ENCODE measurements at regions of chr4 and their contacts with region 1.

Region 1: DNA sequence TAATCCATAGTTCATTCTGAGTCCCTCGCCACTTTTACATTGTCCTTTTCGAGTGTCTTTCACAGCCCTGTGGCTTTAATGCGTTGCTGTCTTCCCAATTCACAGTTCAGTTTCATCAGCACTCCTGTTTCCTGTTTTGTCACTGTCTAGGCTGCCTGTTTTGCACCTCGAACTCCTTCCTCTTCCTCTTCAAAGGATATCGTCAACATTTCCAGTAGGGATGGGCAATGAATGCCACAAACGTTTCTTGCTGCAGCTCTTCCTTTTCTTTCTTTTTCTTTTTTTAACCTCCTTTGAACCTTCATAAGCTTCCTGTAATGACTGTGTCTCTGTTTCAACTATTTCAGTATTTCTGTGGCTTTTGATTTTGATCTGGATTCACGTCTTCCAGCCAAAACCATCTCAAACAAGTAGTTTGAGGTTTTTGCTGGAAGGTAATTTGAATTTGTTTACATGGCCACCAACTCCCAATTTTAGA is 105.4 kb downstream of the ANXA3 start:
- DNase-seq: peak; percentile 45
- H3K4me3 Mint-ChIP-seq: peak overlapping the region; percentile 32
- H3K27ac Mint-ChIP-seq: peak overlapping the region; percentile 84
- H3K4me1 Mint-ChIP-seq: peaks cover 45% of the 10 kb centered on the region
- H3K27me3 Mint-ChIP-seq: no peaks in the 10 kb centered on the region

Region 2: GRCh38 chr4:77629885-77630284 is 1027.1 kb before region 1 on chr4:
- CTCF ChIA-PET with region 1: no interaction called
- intact Hi-C with region 1: loop called (anchors 2 kb)
- DNase-seq: peak; percentile 37
- H3K4me3 Mint-ChIP-seq: no peak overlapping the region
- H3K27ac Mint-ChIP-seq: no peak overlapping the region
- H3K4me1 Mint-ChIP-seq: peaks cover 16% of the 10 kb centered on the region
- H3K27me3 Mint-ChIP-seq: no peaks in the 10 kb centered on the region

Region 3: GRCh38 chr4:78534286-78534955 is 122.6 kb before region 1 on chr4:
- CTCF ChIA-PET with region 1: no interaction called
- intact Hi-C with region 1: no loop called
- DNase-seq: no peak
- H3K4me3 Mint-ChIP-seq: no peak overlapping the region
- H3K27ac Mint-ChIP-seq: no peak overlapping the region
- H3K4me1 Mint-ChIP-seq: no peaks in the 10 kb centered on the region
- H3K27me3 Mint-ChIP-seq: peaks cover 3% of the 10 kb centered on the region

Region 4: GRCh38 chr4:78612398-78613178 is 44.4 kb before region 1 on chr4:
- CTCF ChIA-PET with region 1: interaction called, 3 read pairs
- intact Hi-C with region 1: loop called (anchors 2 kb)
- DNase-seq: peak; percentile 42
- H3K4me3 Mint-ChIP-seq: no peak overlapping the region
- H3K27ac Mint-ChIP-seq: no peak overlapping the region
- H3K4me1 Mint-ChIP-seq: peaks cover 39% of the 10 kb centered on the region
- H3K27me3 Mint-ChIP-seq: no peaks in the 10 kb centered on the region

Region 5: DNA sequence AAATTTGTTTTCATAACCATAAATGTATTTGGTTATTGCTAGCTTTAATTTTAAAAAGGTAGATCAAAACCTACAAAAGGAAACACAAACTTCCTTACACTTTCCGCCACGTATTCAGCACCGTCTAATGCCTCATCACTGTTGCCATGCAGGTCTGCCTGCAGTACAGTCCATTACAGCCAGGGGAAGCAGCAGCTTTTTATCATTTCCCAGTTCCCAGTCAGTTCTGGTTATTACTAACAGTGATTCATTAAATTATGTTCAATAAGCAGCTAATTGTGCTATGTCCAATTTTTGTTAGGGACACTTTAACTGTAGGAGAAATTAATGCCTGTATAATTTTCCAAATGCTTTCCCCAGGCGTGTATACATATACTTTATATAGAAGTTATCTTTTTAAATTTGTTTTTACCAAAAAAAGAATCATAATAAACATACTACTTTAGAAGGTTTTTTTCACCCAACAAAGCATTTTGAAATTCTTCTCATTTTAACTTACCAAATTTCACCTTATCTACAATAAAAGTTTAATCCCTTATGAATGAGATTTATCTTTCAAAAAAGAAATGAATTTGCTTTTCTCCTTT is 12.2 kb before region 1 on chr4:
- CTCF ChIA-PET with region 1: interaction called, 5 read pairs
- intact Hi-C with region 1: loop called (anchors 1 kb)
- DNase-seq: peak; percentile 78
- H3K4me3 Mint-ChIP-seq: no peak overlapping the region
- H3K27ac Mint-ChIP-seq: no peak overlapping the region
- H3K4me1 Mint-ChIP-seq: peaks cover 7% of the 10 kb centered on the region
- H3K27me3 Mint-ChIP-seq: no peaks in the 10 kb centered on the region

Region 6: GRCh38 chr4:78845472-78845871 is 188.5 kb after region 1 on chr4:
- CTCF ChIA-PET with region 1: interaction called, 4 read pairs
- intact Hi-C with region 1: loop called (anchors 1 kb)
- DNase-seq: no peak
- H3K4me3 Mint-ChIP-seq: no peak overlapping the region
- H3K27ac Mint-ChIP-seq: no peak overlapping the region
- H3K4me1 Mint-ChIP-seq: peaks cover 13% of the 10 kb centered on the region
- H3K27me3 Mint-ChIP-seq: no peaks in the 10 kb centered on the region